Posterior vena cava (tissue), 2 donors: ENCODE measurements at regions of chr13 and their contacts with region 1.

Region 1: DNA sequence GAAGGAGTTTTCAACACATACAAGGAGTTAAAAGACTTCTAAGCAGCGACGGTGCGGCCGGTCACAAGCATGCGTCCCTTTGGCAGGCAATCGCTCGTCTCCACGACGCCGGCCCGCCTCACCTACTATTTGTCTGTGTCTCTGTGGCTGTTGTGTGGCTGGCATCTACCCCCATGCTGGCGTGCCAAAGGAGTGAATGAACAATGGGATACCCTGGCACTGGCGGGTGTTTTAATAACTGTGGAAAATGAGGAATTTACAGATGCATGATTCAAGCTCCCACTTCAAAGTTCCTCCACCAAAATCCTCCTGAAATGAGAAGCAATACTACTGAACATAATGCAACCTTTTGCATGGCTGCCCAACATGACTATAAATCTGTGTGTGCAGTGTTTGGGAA is 176.6 kb downstream of the KLF5 start:
- DNase-seq: no peak

Region 2: GRCh38 chr13:73210218-73210883 is 25.0 kb before region 1 on chr13:
- intact Hi-C with region 1: loop called in 1 of 2 experiments (anchors 2 kb)
- DNase-seq: no peak

Region 3: GRCh38 chr13:73341748-73342147 is 106.4 kb after region 1 on chr13:
- intact Hi-C with region 1: no loop called
- DNase-seq: no peak

Region 4: GRCh38 chr13:73365240-73365639 is 129.9 kb after region 1 on chr13:
- intact Hi-C with region 1: no loop called
- DNase-seq: no peak